ENCODE measurements at regions of chr2 and their contacts with region 1.

Region 1: GRCh38 chr2:223197046-223197445 is 145.1 kb downstream of the KCNE4 start:
- DNase-seq: no peak
- H3K4me3 ChIP-seq: no peak overlapping the region
- H3K27ac ChIP-seq: peak overlapping the region; percentile 15
- H3K4me1 ChIP-seq: peaks cover 48% of the 10 kb centered on the region
- H3K27me3 ChIP-seq: no peaks in the 10 kb centered on the region
- CTCF ChIP-seq: no peak

Region 2: DNA sequence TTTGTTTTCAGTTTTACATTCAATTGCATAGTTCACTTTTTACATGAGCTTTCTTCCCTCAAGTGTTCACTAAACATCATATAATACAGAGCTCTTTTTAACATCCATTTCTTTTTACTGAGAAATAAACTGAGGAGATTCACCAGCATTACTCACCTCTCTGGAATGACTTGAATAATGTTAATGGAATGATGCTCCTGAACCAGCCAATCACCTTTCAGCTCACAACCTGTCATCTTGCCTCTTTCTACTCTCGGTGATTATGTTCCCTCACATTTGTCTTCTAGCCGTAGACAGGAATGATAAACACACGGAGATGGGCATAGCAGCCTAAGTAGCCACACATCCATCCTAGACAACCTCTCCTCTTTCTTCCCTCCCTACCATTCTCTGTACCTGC is 1199.9 kb before region 1 on chr2:
- CTCF ChIA-PET with region 1: no interaction called
- POLR2A ChIA-PET with region 1: interaction called, 14 read pairs
- intact Hi-C with region 1: no loop called
- DNase-seq: peak; percentile 35
- H3K4me3 ChIP-seq: no peak overlapping the region
- H3K27ac ChIP-seq: no peak overlapping the region
- H3K4me1 ChIP-seq: peaks cover 10% of the 10 kb centered on the region
- H3K27me3 ChIP-seq: no peaks in the 10 kb centered on the region
- CTCF ChIP-seq: no peak

Region 3: GRCh38 chr2:223041527-223042109 is 155.4 kb before region 1 on chr2:
- CTCF ChIA-PET with region 1: no interaction called
- POLR2A ChIA-PET with region 1: no interaction called
- intact Hi-C with region 1: loop called (anchors 1 kb)
- DNase-seq: peak; percentile 98
- H3K4me3 ChIP-seq: no peak overlapping the region
- H3K27ac ChIP-seq: peak overlapping the region; percentile 95
- H3K4me1 ChIP-seq: peaks cover 65% of the 10 kb centered on the region
- H3K27me3 ChIP-seq: no peaks in the 10 kb centered on the region
- CTCF ChIP-seq: no peak

Region 4: DNA sequence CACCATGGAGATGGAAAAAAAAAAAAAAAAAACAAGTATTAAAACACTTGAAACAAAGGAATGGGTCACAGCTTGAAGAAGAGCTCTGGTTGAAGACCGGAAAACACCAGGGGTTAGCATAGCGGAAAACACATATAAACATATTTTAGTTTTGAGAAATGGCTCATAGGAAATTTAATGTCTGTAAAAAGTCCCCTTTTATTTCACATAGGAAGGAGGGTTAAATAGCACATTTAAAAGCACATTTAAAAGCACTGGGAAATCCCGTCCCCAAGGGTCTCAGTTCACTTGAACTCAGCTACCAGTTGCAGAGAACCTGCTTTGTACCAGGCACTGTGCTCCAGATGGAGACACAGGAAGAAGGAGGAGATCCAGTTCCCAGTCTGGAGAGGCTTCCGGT is 79.5 kb before region 1 on chr2:
- CTCF ChIA-PET with region 1: no interaction called
- POLR2A ChIA-PET with region 1: no interaction called
- intact Hi-C with region 1: loop called (anchors 1 kb)
- DNase-seq: peak; percentile 98
- H3K4me3 ChIP-seq: no peak overlapping the region
- H3K27ac ChIP-seq: peak overlapping the region; percentile 79
- H3K4me1 ChIP-seq: peaks cover 93% of the 10 kb centered on the region
- H3K27me3 ChIP-seq: no peaks in the 10 kb centered on the region
- CTCF ChIP-seq: no peak

Region 5: DNA sequence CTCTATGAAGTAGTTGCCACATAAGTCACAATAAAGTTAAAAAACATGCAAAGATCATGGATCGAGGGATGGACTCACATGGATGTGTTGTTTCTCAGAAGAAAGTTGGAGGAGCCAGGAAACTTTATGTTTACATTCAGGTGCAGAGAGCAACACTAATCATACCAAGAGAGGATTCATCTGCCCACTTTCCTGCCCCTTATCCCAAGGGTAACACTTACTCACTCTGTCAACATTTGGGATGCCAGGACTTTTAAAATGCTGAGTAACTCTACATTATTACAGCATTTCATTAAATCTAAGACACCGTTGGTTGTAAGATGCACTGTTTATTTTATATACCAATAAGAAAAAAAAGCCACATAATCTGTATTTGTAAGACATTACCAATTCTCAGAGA is 25.4 kb after region 1 on chr2:
- CTCF ChIA-PET with region 1: no interaction called
- POLR2A ChIA-PET with region 1: no interaction called
- intact Hi-C with region 1: no loop called
- DNase-seq: no peak
- H3K4me3 ChIP-seq: no peak overlapping the region
- H3K27ac ChIP-seq: no peak overlapping the region
- H3K4me1 ChIP-seq: no peaks in the 10 kb centered on the region
- H3K27me3 ChIP-seq: no peaks in the 10 kb centered on the region
- CTCF ChIP-seq: no peak

Region 6: GRCh38 chr2:223285370-223286265 is 88.6 kb after region 1 on chr2:
- CTCF ChIA-PET with region 1: no interaction called
- POLR2A ChIA-PET with region 1: no interaction called
- intact Hi-C with region 1: no loop called
- DNase-seq: no peak
- H3K4me3 ChIP-seq: no peak overlapping the region
- H3K27ac ChIP-seq: no peak overlapping the region
- H3K4me1 ChIP-seq: no peaks in the 10 kb centered on the region
- H3K27me3 ChIP-seq: no peaks in the 10 kb centered on the region
- CTCF ChIP-seq: no peak

Region 7: GRCh38 chr2:223744573-223744972 is 547.5 kb after region 1 on chr2:
- CTCF ChIA-PET with region 1: no interaction called
- POLR2A ChIA-PET with region 1: no interaction called
- intact Hi-C with region 1: loop called (anchors 1 kb)
- DNase-seq: no peak
- H3K4me3 ChIP-seq: no peak overlapping the region
- H3K27ac ChIP-seq: peak overlapping the region; percentile 96
- H3K4me1 ChIP-seq: peaks cover 48% of the 10 kb centered on the region
- H3K27me3 ChIP-seq: no peaks in the 10 kb centered on the region
- CTCF ChIP-seq: no peak